ENCODE measurements at regions of chr2 and their contacts with region 1.

Region 1: GRCh38 chr2:176088048-176088936 is 4.2 kb upstream of the HOXD13 start:
- DNase-seq: peak; percentile 58 to 80 (median 79)
- ATAC-seq: peak; percentile 81 to 82
- H3K4me3 ChIP-seq: peak overlapping the region; percentile 8
- H3K27ac ChIP-seq: no peak overlapping the region
- H3K4me1 ChIP-seq: peaks cover 3% of the 10 kb centered on the region
- H3K27me3 ChIP-seq: peaks cover 5% of the 10 kb centered on the region

Region 2: DNA sequence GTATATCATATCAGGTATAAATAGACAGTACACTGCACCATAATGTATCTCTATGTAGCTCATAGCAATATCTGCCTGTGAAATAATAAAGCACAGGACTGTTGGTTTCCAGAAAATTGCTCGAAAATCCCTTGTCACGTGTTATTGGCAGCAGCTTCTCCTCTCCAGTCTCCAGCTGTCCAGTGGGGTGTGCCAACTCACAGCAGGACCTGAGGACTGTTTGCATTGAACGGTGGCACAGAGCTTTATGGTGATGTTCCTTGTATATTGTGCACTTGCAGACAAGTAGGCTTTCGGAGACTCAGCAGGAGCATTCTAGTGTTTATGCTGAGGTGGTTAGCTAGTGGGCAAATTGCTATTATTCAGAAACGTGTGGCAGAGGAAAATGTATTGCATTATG is 724.6 kb before region 1 on chr2:
- intact Hi-C with region 1: loop called in 1 of 4 experiments (anchors 5 kb)
- DNase-seq: no peak
- ATAC-seq: no peak
- H3K4me3 ChIP-seq: no peak overlapping the region
- H3K27ac ChIP-seq: no peak overlapping the region
- H3K4me1 ChIP-seq: no peaks in the 10 kb centered on the region
- H3K27me3 ChIP-seq: peaks cover 2% of the 10 kb centered on the region

Region 3: DNA sequence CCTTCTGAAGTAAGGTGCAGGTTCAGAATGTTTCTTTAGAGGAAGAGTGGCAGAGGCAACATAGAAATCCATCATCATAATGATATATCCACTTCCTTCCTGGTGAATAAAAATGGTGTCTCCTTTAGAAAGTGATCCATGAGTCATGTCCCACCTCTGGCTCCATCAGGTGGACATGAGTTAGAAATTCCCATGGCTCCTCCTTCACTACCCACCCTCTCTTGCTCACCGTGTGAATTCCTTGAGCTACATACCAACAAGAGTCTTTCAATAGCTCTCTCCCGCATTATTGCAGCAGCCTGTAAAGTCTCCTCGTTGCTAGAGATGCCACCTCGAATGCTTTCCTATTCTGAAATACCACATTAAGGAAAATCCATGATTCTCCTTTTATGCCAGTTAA is 403.8 kb before region 1 on chr2:
- intact Hi-C with region 1: loop called (anchors 2 to 10 kb)
- DNase-seq: no peak
- ATAC-seq: no peak
- H3K4me3 ChIP-seq: no peak overlapping the region
- H3K27ac ChIP-seq: no peak overlapping the region
- H3K4me1 ChIP-seq: no peaks in the 10 kb centered on the region
- H3K27me3 ChIP-seq: no peaks in the 10 kb centered on the region